ENCODE measurements at regions of chr9 and their contacts with region 1.

Region 1: DNA sequence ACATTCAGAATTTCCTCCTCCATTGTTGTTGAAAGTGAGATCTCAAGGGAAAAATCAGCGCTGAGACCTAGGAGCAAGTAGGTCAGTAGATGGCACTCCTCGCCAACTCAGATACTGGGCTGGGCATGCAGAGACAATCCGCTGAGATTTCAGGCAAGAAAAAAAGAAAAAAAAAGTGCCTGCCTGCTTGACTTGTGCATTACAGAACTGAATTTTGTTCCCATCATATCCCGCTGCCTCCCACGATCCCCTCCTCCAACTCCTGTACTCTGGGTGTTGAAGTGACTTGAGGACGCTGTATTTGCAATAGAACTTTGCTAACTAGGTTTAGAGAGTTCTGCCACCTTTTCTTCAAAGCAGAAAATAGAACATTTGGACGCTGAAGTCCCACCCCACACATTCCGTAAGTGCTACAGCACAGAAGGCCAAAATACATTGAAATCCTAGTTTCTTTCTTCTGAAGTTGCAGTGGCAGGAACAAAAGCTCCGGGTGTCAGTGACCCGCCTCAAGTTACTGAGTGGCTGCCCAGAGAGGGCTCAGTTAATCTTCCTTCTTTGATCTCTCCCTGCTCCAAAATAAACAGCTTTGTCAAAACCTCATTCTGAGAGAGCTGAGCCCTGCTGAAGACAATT is 265.8 kb downstream of the MLLT3 start:
- DNase-seq: peak; percentile 70
- H3K4me3 ChIP-seq: no peak overlapping the region
- H3K27ac ChIP-seq: no peak overlapping the region
- H3K4me1 ChIP-seq: peaks cover 9% of the 10 kb centered on the region
- H3K27me3 ChIP-seq: no peaks in the 10 kb centered on the region
- CTCF ChIP-seq: peak; percentile 85 to 89

Region 2: DNA sequence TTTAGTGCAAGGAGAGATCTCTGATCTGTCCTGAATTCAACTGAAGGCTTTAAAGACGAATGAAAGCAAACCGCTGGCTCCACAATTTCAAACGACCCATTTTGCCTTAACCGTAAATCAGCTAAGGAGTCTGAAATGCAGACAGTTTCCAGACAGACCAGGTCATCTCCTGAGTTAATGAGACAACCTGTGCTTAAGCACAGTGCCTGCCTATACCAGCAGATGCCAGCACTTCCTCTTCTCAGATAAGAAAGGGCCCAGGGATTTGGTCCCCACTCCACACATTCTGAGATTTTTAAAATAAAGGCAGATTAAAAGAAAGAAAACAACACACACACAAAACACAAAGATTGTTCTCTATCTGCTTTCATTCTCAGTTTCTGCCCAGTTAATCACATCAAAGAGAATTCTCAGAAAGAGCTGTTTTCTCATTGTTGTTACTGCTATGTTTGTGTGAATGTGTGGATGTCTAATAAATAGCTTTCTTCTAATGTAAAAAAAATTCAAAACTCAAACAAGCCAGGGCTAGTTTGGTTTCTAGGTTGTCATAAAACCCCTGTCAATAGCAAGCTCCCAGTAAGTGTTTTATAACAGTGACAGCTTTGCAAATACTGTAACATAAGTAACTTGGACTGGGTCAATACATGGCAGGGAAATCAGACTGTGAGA is 409.9 kb before region 1 on chr9:
- CTCF ChIA-PET with region 1: no interaction called
- dilution Hi-C with region 1: no loop called
- in situ Hi-C with region 1: no loop called
- intact Hi-C with region 1: loop called (anchors 1 kb)
- DNase-seq: peak; percentile 32
- H3K4me3 ChIP-seq: no peak overlapping the region
- H3K27ac ChIP-seq: no peak overlapping the region
- H3K4me1 ChIP-seq: peaks cover 2% of the 10 kb centered on the region
- H3K27me3 ChIP-seq: no peaks in the 10 kb centered on the region
- CTCF ChIP-seq: peak; percentile 55 to 75

Region 3: DNA sequence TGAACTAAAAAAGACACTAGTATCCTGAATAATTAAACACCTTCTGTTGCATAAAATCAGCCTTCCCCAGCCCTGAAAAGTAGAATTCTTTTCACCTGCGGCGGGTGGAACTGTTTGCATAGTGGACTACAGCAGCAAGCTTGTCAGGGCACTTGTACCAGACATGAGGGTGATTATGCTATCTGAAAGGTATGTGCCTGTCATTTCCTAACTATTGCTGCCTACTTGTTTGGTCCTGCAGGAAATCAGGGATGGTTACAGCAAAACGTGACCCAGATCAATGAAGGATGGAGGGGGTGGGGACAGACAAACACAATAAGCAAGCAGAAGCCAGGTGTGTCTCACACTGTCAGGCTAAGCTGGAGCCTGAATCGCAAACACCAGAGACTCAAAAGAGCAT is 119.8 kb before region 1 on chr9:
- CTCF ChIA-PET with region 1: interaction called, 6 read pairs
- dilution Hi-C with region 1: no loop called
- in situ Hi-C with region 1: no loop called
- intact Hi-C with region 1: loop called (anchors 5 kb)
- DNase-seq: peak; percentile 86
- H3K4me3 ChIP-seq: no peak overlapping the region
- H3K27ac ChIP-seq: peak overlapping the region; percentile 56
- H3K4me1 ChIP-seq: peaks cover 25% of the 10 kb centered on the region
- H3K27me3 ChIP-seq: no peaks in the 10 kb centered on the region
- CTCF ChIP-seq: no peak

Region 4: DNA sequence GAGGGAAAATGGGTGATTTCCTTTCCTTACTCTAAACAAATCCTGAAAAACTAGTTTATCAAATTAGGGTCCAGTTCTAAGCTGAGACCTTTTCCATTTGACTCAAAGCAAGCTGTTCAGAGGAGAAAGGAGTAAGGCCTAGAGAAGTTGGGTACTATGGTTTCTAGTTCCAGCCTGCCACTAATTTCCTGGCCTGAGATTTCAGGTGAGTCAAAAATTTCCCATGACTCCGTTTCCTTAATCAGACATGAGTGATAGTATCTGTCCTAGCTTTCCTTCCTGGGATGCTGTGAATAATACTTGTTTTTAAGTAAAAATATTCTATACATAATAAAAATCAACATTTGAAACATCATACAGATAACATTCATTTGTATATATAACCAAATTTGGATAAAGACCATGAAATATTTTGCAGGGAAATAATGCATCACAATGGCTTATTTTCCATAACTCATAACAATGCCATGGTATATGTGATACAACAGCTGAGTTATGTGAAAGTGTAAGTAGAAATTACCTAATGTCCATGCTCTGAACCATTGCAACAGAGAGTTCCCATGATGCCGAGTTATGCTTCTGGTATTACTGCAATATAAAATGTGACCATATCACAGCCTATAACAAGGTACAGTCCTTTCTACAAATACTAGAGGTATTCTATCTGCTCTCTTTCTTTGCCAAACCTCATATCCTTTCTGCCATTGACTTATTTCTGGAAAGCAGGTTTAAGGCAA is 123.1 kb after region 1 on chr9:
- CTCF ChIA-PET with region 1: no interaction called
- dilution Hi-C with region 1: no loop called
- in situ Hi-C with region 1: no loop called
- intact Hi-C with region 1: loop called (anchors 5 kb)
- DNase-seq: peak; percentile 81
- H3K4me3 ChIP-seq: no peak overlapping the region
- H3K27ac ChIP-seq: no peak overlapping the region
- H3K4me1 ChIP-seq: peaks cover 16% of the 10 kb centered on the region
- H3K27me3 ChIP-seq: peaks cover 5% of the 10 kb centered on the region
- CTCF ChIP-seq: no peak

Region 5: GRCh38 chr9:20593551-20593950 is 237.0 kb after region 1 on chr9:
- CTCF ChIA-PET with region 1: no interaction called
- dilution Hi-C with region 1: no loop called
- in situ Hi-C with region 1: no loop called
- intact Hi-C with region 1: no loop called
- DNase-seq: peak; percentile 34
- H3K4me3 ChIP-seq: no peak overlapping the region
- H3K27ac ChIP-seq: no peak overlapping the region
- H3K4me1 ChIP-seq: no peaks in the 10 kb centered on the region
- H3K27me3 ChIP-seq: no peaks in the 10 kb centered on the region
- CTCF ChIP-seq: no peak

Region 6: GRCh38 chr9:20941174-20941690 is 584.7 kb after region 1 on chr9:
- CTCF ChIA-PET with region 1: no interaction called
- dilution Hi-C with region 1: no loop called
- in situ Hi-C with region 1: loop called (anchors 10 to 25 kb)
- intact Hi-C with region 1: loop called (anchors 1 kb)
- DNase-seq: peak; percentile 66
- H3K4me3 ChIP-seq: no peak overlapping the region
- H3K27ac ChIP-seq: no peak overlapping the region
- H3K4me1 ChIP-seq: no peaks in the 10 kb centered on the region
- H3K27me3 ChIP-seq: no peaks in the 10 kb centered on the region
- CTCF ChIP-seq: peak; percentile 79 to 81